ENCODE measurements at regions of chr2 and their contacts with region 1.

Region 1: GRCh38 chr2:127387655-127388422 is at the start of gene MAP3K2:
- DNase-seq: peak; percentile 96
- H3K4me3 ChIP-seq: peak within 1 kb of the TSS; percentile 95
- H3K27ac ChIP-seq: peak within 1 kb of the TSS; percentile 98
- H3K4me1 ChIP-seq: peaks cover 68% of the 10 kb centered on the region
- CTCF ChIP-seq: no peak
- total RNA-seq, gene MAP3K2: 33.2 and 47.5 TPM in 2 replicates

Region 2: DNA sequence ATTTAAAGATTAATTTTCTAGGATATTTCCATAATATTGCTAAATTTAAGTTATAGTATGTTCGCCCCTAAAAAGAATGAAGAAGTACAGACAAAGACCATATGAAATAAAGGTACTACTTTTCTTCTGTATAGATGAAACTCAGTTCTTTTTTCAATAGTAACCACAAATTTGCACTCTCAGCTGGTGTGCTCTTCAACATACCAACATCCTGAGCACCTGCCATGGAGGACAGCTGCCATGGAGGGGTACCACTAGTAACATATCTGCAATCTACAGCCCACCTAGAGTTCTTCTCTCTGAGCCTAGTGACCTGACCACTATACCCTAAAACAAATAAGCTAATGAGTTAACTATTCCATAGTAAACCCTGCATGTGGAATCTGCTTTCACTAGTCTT is 57.1 kb before region 1 on chr2:
- CTCF ChIA-PET with region 1: no interaction called
- POLR2A ChIA-PET with region 1: no interaction called
- intact Hi-C with region 1: loop called (anchors 2 kb)
- DNase-seq: peak; percentile 65
- H3K4me3 ChIP-seq: no peak overlapping the region
- H3K27ac ChIP-seq: peak overlapping the region; percentile 25
- H3K4me1 ChIP-seq: peaks cover 16% of the 10 kb centered on the region
- CTCF ChIP-seq: no peak

Region 3: GRCh38 chr2:127355386-127356008 is 32.3 kb before region 1 on chr2:
- CTCF ChIA-PET with region 1: no interaction called
- POLR2A ChIA-PET with region 1: interaction called, 3 read pairs
- intact Hi-C with region 1: loop called (anchors 2 kb)
- DNase-seq: peak; percentile 42
- H3K4me3 ChIP-seq: no peak overlapping the region
- H3K27ac ChIP-seq: no peak overlapping the region
- H3K4me1 ChIP-seq: no peaks in the 10 kb centered on the region
- CTCF ChIP-seq: peak; percentile 94

Region 4: GRCh38 chr2:127398239-127398590 is 10.4 kb after region 1 on chr2:
- CTCF ChIA-PET with region 1: no interaction called
- POLR2A ChIA-PET with region 1: interaction called, 12 read pairs
- intact Hi-C with region 1: no loop called
- DNase-seq: no peak
- H3K4me3 ChIP-seq: no peak overlapping the region
- H3K27ac ChIP-seq: no peak overlapping the region
- H3K4me1 ChIP-seq: peaks cover 14% of the 10 kb centered on the region
- CTCF ChIP-seq: no peak

Region 5: DNA sequence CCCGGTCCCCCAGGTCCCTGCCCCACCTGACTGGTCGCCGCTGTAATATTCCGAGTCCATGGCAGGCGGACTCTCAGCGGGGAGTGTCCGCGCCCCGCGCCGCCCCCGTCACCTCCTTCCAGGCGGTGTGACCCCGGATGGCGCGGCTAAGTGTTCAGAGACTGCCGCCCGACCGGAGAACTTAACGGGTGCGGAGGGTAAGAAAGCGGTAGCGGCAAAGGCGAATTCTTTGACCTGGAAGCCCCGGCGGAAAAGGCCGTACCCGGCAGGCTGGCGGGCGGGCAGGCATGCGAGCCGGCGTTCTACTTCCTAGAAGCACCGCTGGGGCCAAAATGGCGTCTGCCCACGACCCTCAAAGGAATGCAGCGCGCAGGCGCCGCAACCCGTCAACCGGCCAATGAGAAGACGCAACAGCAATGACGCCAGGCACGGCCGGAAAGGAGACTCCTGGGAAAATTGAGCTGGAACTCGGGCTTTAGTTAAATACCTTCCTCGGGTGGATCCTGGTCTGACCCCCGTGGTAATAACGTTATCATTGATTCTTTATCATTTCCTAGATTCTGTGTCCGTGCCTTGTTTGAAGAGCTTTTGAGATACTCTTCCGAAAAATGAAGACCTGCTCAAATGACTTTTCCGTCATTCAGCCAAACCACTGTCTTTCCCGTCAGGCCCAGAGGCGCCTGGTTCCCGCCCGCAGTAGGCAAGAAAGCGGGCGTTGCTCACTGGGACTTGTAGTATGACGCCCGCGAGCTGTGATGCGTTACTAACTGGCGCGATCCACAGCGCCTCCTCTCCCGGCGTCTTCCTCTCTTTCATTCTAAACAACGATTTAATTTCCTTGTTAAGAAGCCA is 138.5 kb after region 1 on chr2 and contains the start of gene IWS1:
- CTCF ChIA-PET with region 1: no interaction called
- POLR2A ChIA-PET with region 1: interaction called, 5 read pairs
- intact Hi-C with region 1: loop called (anchors 5 kb)
- DNase-seq: peak; percentile 97
- H3K4me3 ChIP-seq: peak within 1 kb of the TSS; percentile 82
- H3K27ac ChIP-seq: peak within 1 kb of the TSS; percentile 85
- H3K4me1 ChIP-seq: peaks cover 26% of the 10 kb centered on the region
- CTCF ChIP-seq: peak; percentile 60; the same call in 1 of the 2 replicates
- total RNA-seq, gene IWS1: 49.2 and 70.4 TPM in 2 replicates

Measured in OCI-LY7 (cell line).